CD4-positive, alpha-beta memory T cell (primary cell): ENCODE measurements at regions of chr6 and their contacts with region 1.

Region 1: DNA sequence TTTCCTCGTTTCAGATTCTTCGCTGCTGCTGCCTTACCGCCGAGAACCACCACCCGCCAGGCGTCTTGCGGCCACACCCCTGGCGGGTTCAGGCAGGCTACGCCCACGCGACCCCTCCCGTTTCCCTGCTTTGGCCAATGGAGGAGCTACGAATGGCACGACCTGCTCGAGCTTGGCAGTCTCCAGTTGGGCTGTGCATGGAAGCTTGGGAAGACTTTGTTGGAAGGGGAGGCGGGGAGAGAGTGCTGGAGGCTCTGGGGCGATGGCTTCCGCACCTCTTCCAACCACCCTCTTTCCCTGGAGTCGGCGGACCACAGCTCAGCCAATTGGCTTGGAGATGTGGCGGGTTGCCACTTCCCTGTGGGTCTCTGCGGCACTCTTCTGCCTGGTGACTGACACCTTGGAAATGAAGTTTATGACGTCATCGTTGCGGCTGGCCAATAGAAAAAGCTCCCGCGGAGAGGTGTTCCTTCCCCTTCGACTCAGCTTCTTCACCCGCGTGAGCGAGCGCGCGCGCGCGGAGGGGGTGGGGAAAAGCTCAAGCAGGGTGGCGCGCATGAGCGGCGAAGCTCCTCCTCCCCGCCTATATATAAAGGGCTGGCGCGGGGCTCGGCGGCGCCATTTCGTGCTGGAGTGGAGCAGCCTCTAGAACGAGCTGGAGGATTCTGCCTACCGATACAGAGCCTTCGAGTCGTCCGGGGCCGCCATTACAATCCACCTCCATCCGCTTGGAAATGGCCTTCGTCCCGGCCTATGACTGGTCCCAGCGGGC is 3.4 kb downstream of the BRD2 start:
- DNase-seq: peak; percentile 100
- H3K4me3 ChIP-seq: peak overlapping the region; percentile 90 to 95
- H3K4me3 Mint-ChIP-seq: peak overlapping the region; percentile 91 to 99 (median 95)
- H3K27ac ChIP-seq: peak overlapping the region; percentile 95
- H3K27ac Mint-ChIP-seq: peak overlapping the region; percentile 99 to 100 (median 100)
- H3K4me1 ChIP-seq: peaks cover 36% of the 10 kb centered on the region
- H3K4me1 Mint-ChIP-seq: peaks cover 26 to 84% (median 33%) of the 10 kb centered on the region in 4 donors
- H3K27me3 ChIP-seq: no peaks in the 10 kb centered on the region
- H3K27me3 Mint-ChIP-seq: no peaks in the 10 kb centered on the region

Region 2: DNA sequence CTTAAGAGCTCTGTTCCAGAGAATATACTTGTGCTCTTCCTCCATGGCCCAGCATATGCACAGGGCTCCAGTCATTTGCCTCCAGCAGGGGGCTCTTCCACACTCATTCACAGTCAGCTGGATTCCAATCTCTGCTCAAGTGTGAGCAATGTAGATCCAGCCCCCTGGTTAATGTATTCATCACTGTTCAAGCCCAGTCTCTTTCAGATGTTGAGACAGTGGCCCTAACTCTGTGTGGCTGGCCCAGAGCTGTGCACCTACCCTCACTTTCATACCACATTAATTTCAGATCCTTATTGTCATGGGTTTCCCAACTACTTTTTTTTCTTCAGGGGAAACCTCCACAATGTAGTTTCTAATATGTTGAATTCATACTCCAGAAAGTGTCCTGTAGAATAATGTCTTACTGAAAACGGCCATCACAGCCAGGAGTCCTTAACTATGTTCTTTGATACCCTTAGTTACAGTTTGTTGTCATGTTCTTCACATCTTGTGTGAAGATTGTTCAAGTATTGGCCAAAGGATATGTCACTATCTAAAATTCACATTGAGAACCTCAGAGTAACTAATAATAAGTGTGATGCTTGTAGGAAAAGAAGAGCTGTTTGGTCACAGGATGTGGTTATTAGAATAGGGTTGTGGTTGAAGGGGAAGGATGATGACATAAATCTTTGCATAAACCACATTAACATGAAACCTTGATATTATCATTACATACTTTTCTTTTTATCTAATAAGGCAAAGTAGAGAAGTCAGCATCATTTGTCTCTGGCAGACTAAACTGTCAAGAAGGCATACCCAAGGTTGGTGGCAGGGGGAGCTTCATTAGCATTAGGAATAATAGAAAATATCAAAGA is 349.0 kb before region 1 on chr6:
- CTCF ChIA-PET with region 1: no interaction called
- POLR2A ChIA-PET with region 1: interaction called, 11 read pairs
- intact Hi-C with region 1: no loop called
- DNase-seq: peak; percentile 71 to 90 (median 86)
- H3K4me3 ChIP-seq: peak overlapping the region in 1 of 2 donors; percentile 30
- H3K4me3 Mint-ChIP-seq: peak overlapping the region; percentile 28 to 75 (median 71)
- H3K27ac ChIP-seq: peak overlapping the region; percentile 85
- H3K27ac Mint-ChIP-seq: peak overlapping the region; percentile 82 to 99 (median 95)
- H3K4me1 ChIP-seq: peaks cover 53% of the 10 kb centered on the region
- H3K4me1 Mint-ChIP-seq: peaks cover 37 to 68% (median 44%) of the 10 kb centered on the region in 4 donors
- H3K27me3 ChIP-seq: no peaks in the 10 kb centered on the region
- H3K27me3 Mint-ChIP-seq: no peaks in the 10 kb centered on the region

Region 3: DNA sequence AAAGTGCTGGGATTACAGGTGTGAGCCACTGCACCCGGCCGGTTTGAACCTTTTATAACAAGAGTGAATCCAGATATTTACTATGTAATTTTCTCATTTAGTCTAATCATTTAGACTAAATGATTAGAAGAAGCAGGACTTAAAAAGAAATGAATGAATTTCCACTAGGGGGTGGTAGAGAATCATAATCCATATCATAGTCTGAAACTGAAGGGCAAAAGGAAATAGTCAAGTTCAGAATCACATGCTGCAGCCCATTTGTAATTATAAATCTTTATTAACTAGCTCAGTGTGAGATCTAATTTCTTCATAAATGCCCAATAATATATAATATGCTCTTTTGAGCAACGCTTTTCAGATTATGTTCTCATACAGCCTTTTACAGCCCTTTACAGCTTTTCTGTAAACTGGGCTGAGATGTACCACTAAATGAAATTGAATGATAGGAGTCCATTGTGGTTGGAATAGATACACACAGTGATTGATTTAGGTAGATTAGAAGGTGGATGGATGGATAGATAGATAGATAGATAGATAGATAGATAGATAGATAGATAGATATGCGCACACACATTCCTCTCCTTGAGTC is 86.0 kb before region 1 on chr6:
- CTCF ChIA-PET with region 1: interaction called, 18 read pairs
- POLR2A ChIA-PET with region 1: interaction called, 14 read pairs
- intact Hi-C with region 1: loop called (anchors 5 kb)
- DNase-seq: peak in 4 of 5 donors; percentile 64 to 75 (median 69)
- H3K4me3 ChIP-seq: no peak overlapping the region
- H3K4me3 Mint-ChIP-seq: no peak overlapping the region
- H3K27ac ChIP-seq: no peak overlapping the region
- H3K27ac Mint-ChIP-seq: no peak overlapping the region
- H3K4me1 ChIP-seq: no peaks in the 10 kb centered on the region
- H3K4me1 Mint-ChIP-seq: no peaks in the 10 kb centered on the region
- H3K27me3 ChIP-seq: no peaks in the 10 kb centered on the region
- H3K27me3 Mint-ChIP-seq: no peaks in the 10 kb centered on the region

Region 4: GRCh38 chr6:32952817-32953739 is 18.7 kb before region 1 on chr6 and contains the start of gene HLA-DMA:
- CTCF ChIA-PET with region 1: interaction called, 537 read pairs
- POLR2A ChIA-PET with region 1: interaction called, 607 read pairs
- intact Hi-C with region 1: loop called (anchors 1 kb)
- DNase-seq: peak; percentile 76 to 90 (median 85)
- H3K4me3 ChIP-seq: peak within 1 kb of the TSS; percentile 7 to 19
- H3K4me3 Mint-ChIP-seq: peak within 1 kb of the TSS; percentile 18 to 80 (median 68)
- H3K27ac ChIP-seq: peak within 1 kb of the TSS; percentile 31
- H3K27ac Mint-ChIP-seq: peak within 1 kb of the TSS; percentile 49 to 89 (median 82)
- H3K4me1 ChIP-seq: peaks cover 27% of the 10 kb centered on the region
- H3K4me1 Mint-ChIP-seq: peaks cover 24 to 44% (median 34%) of the 10 kb centered on the region in 4 donors
- H3K27me3 ChIP-seq: no peaks in the 10 kb centered on the region
- H3K27me3 Mint-ChIP-seq: no peaks in the 10 kb centered on the region
- total RNA-seq, gene HLA-DMA: 8.5 to 10.2 TPM

Region 5: DNA sequence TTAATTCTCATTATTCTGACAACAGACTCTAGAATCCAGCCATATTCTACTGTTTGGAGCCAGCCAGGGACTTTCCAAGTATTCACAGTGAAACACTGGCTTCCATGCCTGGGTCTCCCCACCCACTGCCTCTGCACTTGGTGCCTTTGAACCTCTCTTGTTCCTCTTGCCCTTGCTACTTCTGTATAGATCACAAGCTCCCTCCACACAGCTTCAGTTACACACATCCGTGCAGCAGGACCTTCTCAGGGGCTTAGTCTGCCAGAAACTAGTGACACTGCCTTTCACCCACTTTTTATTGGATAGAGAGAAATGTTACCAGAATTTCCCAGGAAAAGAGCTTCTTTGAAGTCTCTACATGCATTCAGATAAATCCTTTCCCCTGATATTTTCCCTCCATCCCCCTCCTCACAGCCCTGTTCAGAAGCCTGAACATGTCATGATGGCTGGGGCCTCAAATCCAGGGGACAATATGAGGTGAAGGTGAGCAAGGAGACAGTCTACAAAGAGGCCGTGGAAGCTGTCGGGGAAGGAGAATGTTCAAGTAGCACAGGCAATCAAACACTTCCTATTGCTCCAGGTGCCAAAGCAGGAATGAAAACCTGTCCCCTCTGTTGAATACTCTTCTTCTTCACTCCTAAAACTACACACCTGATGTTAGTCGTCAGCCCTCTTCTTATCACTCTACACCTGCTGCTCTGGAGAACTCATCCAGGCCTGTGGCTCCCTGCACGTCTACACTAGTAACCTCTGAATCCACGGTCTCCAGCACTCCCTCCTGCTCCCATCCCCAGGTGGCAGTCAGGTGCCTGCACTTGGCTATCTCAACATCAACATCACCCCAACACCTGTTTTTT is 57.8 kb after region 1 on chr6:
- CTCF ChIA-PET with region 1: no interaction called
- POLR2A ChIA-PET with region 1: no interaction called
- intact Hi-C with region 1: no loop called
- DNase-seq: no peak
- H3K4me3 ChIP-seq: no peak overlapping the region
- H3K4me3 Mint-ChIP-seq: no peak overlapping the region
- H3K27ac ChIP-seq: no peak overlapping the region
- H3K27ac Mint-ChIP-seq: peak overlapping the region in 2 of 7 donors; percentile 2 to 5
- H3K4me1 ChIP-seq: peaks cover 5% of the 10 kb centered on the region
- H3K4me1 Mint-ChIP-seq: peaks cover 0 to 5% (median 2%) of the 10 kb centered on the region in 4 donors
- H3K27me3 ChIP-seq: no peaks in the 10 kb centered on the region
- H3K27me3 Mint-ChIP-seq: peaks cover 2 to 5% of the 10 kb centered on the region in 2 donors

Region 6: GRCh38 chr6:33271458-33272274 is 299.9 kb after region 1 on chr6 and contains the starts of genes RPS18 and VPS52:
- CTCF ChIA-PET with region 1: no interaction called
- POLR2A ChIA-PET with region 1: interaction called, 28 read pairs
- intact Hi-C with region 1: no loop called
- DNase-seq: peak; percentile 95 to 98 (median 96)
- H3K4me3 ChIP-seq: peak within 1 kb of the TSS; percentile 75 to 90
- H3K4me3 Mint-ChIP-seq: peak within 1 kb of the TSS; percentile 96 to 100 (median 98)
- H3K27ac ChIP-seq: peak within 1 kb of the TSS; percentile 85
- H3K27ac Mint-ChIP-seq: peak within 1 kb of the TSS; percentile 97 to 100 (median 99)
- H3K4me1 ChIP-seq: peaks cover 62% of the 10 kb centered on the region
- H3K4me1 Mint-ChIP-seq: peaks cover 43 to 78% (median 61%) of the 10 kb centered on the region in 4 donors
- H3K27me3 ChIP-seq: no peaks in the 10 kb centered on the region
- H3K27me3 Mint-ChIP-seq: no peaks in the 10 kb centered on the region
- total RNA-seq, gene RPS18: 3,264 to 3,439 TPM
- total RNA-seq, gene VPS52: 89.4 to 95.7 TPM

Region 7: GRCh38 chr6:33410050-33410710 is 438.4 kb after region 1 on chr6:
- CTCF ChIA-PET with region 1: no interaction called
- POLR2A ChIA-PET with region 1: interaction called, 7 read pairs
- intact Hi-C with region 1: loop called (anchors 1 kb)
- DNase-seq: peak; percentile 97 to 98 (median 97)
- H3K4me3 ChIP-seq: peak overlapping the region; percentile 67 to 92
- H3K4me3 Mint-ChIP-seq: peak overlapping the region; percentile 85 to 95 (median 92)
- H3K27ac ChIP-seq: peak overlapping the region; percentile 99
- H3K27ac Mint-ChIP-seq: peak overlapping the region; percentile 94 to 100 (median 99)
- H3K4me1 ChIP-seq: peaks cover 57% of the 10 kb centered on the region
- H3K4me1 Mint-ChIP-seq: peaks cover 31 to 68% (median 48%) of the 10 kb centered on the region in 4 donors
- H3K27me3 ChIP-seq: no peaks in the 10 kb centered on the region
- H3K27me3 Mint-ChIP-seq: no peaks in the 10 kb centered on the region